Dorsolateral prefrontal cortex (tissue), 120 donors: ENCODE measurements at regions of chr19 and their contacts with region 1.

Region 1: GRCh38 chr19:56838909-56839651 is 1.4 kb downstream of the PEG3 start:
- DNase-seq: peak; percentile 95 to 100 (median 98)
- H3K4me3 ChIP-seq: peak overlapping the region in 58 of 59 donors; percentile 47 to 86 (median 72)
- H3K27ac ChIP-seq: peak overlapping the region in 55 of 59 donors; percentile 63 to 99 (median 95)
- H3K27me3 ChIP-seq: no peaks in the 10 kb centered on the region
- CTCF ChIP-seq: no peak

Region 2: GRCh38 chr19:56699552-56699951 is 139.5 kb before region 1 on chr19:
- intact Hi-C with region 1: loop called (anchors 5 kb)
- DNase-seq: peak in 1 of 10 donors; percentile 41
- H3K4me3 ChIP-seq: peak overlapping the region in 2 of 59 donors; percentile 1 to 2
- H3K27ac ChIP-seq: peak overlapping the region in 54 of 59 donors; percentile 0 to 82 (median 61)
- H3K27me3 ChIP-seq: no peaks in the 10 kb centered on the region
- CTCF ChIP-seq: no peak

Region 3: DNA sequence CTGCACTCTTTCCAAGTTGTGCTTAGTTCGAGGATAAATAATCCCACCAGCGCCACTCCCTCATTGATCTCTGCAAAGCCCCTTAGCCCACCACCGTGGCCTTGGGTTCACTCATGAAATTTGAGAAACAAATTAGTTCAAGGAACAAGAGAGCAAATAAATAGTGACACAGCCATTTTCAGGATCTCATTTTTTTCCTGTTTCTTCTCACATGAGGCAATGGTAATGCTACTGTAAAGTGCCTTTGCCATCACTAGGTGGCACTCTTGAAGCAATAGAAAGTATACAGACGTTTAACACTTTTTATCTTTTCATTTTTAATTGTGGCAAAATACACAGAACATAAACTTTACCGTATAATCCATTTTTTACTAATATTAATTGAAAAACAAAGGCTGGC is 90.7 kb before region 1 on chr19:
- intact Hi-C with region 1: loop called (anchors 2 kb)
- DNase-seq: peak in 1 of 10 donors; percentile 70
- H3K4me3 ChIP-seq: peak overlapping the region in 35 of 59 donors; percentile 4 to 52 (median 28)
- H3K27ac ChIP-seq: peak overlapping the region in 53 of 59 donors; percentile 17 to 90 (median 69)
- H3K27me3 ChIP-seq: no peaks in the 10 kb centered on the region
- CTCF ChIP-seq: peak; percentile 61 to 84 (median 77)

Region 4: DNA sequence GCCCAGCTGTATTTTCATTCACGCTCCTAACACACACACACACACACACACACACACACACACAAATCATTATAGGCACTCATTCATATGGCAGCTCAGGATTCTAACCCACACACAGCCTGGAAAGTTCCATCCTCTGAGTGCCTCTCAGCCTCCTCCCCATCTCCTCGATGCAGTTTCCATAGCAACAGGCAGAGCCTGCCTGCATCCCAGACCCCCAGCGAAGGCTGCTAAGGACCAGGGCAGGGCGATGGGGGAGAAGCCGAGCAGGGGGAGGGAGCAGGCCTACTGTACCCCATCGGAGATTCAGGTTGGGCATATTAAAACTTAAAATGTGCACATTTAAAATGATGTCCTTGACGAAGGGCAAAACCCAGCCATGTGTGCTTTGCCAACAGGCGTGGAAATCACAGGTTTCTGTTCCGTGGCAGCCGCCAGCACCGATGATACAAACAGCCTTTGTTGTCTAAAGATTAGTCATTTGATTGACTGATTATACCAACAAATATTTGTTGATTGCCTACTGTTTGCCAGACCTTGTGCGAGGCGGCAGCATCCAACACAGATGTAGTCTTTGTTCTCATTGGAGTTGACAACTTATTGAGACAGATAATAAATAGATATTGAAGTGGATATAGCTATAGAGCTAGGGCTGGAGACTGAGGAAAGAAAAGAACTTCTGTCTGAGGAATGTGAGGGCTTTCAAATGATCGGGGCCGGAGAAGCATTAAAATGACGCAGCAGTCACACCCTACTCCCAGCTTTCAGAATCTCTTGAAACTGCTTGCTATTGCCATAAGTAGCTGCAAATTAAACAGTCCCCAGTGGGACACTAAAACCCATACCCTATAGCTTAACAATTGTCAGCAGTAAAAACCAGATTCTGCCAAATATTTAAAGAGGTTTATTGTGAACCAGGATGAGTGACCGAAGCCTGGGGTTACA is 237.0 kb after region 1 on chr19:
- intact Hi-C with region 1: loop called in 1 of 2 experiments (anchors 10 kb)
- DNase-seq: peak in 8 of 10 donors; percentile 21 to 64 (median 51)
- H3K4me3 ChIP-seq: peak overlapping the region in 5 of 59 donors; percentile 1 to 36 (median 13)
- H3K27ac ChIP-seq: peak overlapping the region in 48 of 59 donors; percentile 5 to 85 (median 57)
- H3K27me3 ChIP-seq: peaks cover 0 to 13% (median 0%) of the 10 kb centered on the region in 45 donors
- CTCF ChIP-seq: no peak